ENCODE measurements at regions of chr7 and their contacts with region 1.

Region 1: DNA sequence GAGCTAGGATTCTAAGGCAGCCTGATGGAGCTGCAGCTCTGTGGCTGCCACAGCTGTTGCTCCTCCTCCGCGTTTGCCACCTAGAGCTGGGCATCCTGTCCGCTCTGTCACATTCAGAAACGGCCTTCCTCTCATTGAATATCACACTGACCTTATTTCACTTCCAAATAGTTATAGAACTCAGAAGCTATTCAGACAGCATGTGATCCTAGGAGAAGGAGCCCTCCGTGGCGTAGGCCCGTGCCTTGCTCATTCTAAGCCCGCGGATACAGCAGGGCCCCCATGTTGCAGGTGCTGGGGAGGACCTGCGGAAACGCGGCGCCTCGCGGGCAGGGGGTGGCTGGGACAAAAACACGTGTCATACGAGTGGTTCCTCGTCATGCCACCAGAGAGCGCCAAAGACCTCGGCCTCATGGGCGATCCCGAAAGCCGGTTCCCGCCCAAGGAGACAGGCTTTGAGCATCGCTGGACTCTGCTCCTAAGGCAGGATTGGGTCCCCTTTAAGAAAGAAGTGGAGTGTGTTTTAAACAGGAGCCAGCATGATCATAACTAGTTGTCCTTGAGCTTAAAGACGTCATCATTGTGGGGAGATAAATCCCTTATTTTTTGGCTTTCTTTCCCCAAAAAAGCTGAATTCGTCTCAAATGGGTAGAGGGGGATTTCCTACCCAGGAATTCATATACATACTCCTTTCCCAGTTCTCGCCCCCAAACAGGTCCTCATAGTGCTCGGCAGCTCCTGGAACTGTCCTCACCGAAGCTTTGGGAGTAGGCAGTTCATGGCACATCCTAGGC is 17.9 kb upstream of the FIGNL1 start:
- DNase-seq: peak; percentile 94
- H3K4me3 Mint-ChIP-seq: peak overlapping the region; percentile 54
- H3K27ac Mint-ChIP-seq: peak overlapping the region; percentile 62
- H3K4me1 Mint-ChIP-seq: peaks cover 10% of the 10 kb centered on the region
- H3K27me3 Mint-ChIP-seq: peaks cover 18% of the 10 kb centered on the region

Region 2: DNA sequence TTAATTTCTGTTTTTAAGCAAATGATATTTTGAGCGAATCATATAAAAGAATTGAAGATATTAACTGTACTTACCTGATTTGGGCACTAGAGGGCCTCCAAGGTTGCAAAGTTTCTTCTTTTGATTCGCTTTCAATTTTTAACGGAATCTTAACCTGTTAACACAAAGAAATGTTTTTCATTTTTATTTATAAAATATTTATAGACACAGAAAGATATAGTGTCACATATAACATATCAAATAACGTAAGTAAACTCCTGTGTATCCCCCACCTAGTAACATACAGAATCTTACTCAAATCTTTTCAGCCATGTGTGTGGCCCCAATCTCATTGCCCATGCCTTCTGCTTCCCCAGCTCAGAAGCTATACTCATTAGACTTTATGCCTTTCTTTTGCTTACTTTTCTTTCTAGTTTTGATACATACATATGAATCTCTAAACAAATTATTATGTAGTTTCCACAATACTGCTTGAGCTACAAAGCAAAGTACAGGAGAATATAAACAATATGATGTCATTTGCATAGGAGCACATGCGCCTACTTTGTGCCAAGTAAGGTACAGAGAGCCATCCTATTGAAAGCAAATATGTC is 325.5 kb before region 1 on chr7:
- intact Hi-C with region 1: loop called (anchors 5 kb)
- DNase-seq: peak; percentile 82
- H3K4me3 Mint-ChIP-seq: peak overlapping the region; percentile 57
- H3K27ac Mint-ChIP-seq: peak overlapping the region; percentile 67
- H3K4me1 Mint-ChIP-seq: peaks cover 31% of the 10 kb centered on the region
- H3K27me3 Mint-ChIP-seq: peaks cover 14% of the 10 kb centered on the region

Region 3: GRCh38 chr7:50502001-50502684 is 34.1 kb after region 1 on chr7:
- intact Hi-C with region 1: no loop called
- DNase-seq: no peak
- H3K4me3 Mint-ChIP-seq: no peak overlapping the region
- H3K27ac Mint-ChIP-seq: no peak overlapping the region
- H3K4me1 Mint-ChIP-seq: no peaks in the 10 kb centered on the region
- H3K27me3 Mint-ChIP-seq: peaks cover 12% of the 10 kb centered on the region

Region 4: DNA sequence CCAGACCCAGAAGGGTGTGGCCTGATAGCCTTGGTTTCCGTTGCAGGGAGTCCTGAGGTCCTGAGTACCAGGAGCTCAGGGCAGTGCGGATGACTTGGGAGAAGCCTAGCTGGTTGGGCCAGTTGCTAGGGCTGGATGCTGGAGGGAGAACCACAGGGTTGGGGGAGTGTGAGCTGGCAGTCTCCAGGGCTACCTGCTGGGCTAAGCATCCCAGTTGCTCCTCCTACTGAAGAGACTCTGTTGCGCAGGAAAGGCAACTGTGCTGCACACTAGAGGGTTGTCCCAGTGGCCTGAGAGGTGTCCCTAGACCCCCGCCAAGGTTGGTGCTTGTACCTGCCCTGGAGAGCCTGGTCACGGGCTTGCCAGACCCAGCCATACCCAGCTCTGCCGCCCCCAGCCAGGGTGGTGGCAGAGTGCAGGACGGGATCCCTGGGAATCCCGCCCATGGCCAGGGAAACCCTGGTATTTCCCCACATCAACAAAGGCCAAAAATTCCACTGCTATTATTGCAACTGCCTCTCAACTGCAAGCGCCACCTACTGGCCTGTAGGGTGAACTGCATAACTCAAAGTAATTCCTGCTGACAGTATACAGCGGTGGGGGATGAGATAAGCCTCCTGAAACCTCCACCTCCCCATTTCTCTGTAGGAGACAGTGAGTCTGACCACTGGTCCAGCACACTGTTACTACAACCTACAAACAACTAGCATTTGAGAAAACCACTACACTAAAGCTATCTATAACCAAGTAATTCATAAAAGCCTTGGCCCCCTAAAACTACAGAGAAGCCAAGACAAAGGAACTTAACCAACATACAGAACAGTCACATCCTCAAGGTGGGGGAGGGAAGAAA is 164.8 kb after region 1 on chr7:
- intact Hi-C with region 1: loop called (anchors 1 kb)
- DNase-seq: peak; percentile 86
- H3K4me3 Mint-ChIP-seq: no peak overlapping the region
- H3K27ac Mint-ChIP-seq: no peak overlapping the region
- H3K4me1 Mint-ChIP-seq: peaks cover 4% of the 10 kb centered on the region
- H3K27me3 Mint-ChIP-seq: peaks cover 35% of the 10 kb centered on the region

Region 5: DNA sequence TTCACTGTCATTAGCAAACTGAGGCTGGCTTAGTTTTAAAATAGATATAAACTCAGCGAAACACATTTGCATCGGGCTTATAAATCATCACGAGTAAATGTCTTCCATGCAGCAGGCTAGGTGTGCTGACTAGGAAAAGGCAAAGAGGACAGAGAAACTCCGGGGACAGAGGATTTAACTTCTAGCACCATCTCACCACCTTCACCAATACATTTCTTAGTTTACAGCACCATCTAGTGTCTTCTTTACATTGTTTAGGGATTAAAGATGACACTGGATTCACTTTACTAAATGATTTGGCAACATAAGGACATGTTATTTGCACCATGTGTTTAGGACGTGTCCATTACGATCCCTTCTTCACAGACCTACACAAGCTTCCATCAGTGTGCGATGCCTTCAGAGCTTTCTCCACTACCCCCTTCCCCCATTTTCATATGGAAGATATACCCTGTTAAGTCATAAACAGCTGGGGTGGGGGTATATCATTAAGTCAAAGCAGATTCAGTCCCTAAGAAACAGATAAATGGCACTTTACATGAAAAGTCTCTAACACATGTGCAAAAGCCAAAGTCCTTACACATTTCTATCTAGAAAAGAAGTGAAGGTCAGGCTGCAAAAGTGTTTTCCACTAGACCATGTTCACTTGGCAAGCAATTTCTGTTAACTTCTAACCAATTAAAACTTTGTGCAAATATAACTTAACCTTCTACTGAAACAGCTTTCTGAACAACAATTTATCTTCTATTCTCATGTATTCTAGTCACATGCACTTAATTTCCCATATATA is 211.4 kb after region 1 on chr7:
- intact Hi-C with region 1: loop called (anchors 1 kb)
- DNase-seq: no peak
- H3K4me3 Mint-ChIP-seq: no peak overlapping the region
- H3K27ac Mint-ChIP-seq: no peak overlapping the region
- H3K4me1 Mint-ChIP-seq: peaks cover 2% of the 10 kb centered on the region
- H3K27me3 Mint-ChIP-seq: peaks cover 18% of the 10 kb centered on the region

Region 6: DNA sequence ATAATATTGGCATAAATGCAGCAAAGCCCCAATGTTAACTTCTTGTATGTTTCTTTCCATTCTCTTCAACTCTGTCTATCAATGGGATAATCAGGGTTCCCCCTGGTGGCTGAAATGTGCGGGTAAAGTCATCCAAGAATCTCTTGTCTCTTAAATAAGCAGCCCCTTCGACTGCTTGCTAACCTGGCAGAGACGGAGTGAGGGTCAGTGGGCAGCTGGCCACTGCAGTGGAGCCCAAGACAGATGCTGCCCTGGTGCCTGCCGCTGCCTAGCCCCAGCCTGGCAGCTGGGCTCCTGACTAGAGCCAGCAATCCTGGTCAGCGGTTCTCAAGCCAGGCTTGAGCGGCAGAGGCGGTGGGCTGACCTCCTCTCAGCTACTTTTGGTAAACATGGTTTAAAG is 599.7 kb after region 1 on chr7:
- intact Hi-C with region 1: loop called (anchors 2 kb)
- DNase-seq: peak; percentile 82
- H3K4me3 Mint-ChIP-seq: no peak overlapping the region
- H3K27ac Mint-ChIP-seq: no peak overlapping the region
- H3K4me1 Mint-ChIP-seq: no peaks in the 10 kb centered on the region
- H3K27me3 Mint-ChIP-seq: no peaks in the 10 kb centered on the region

Region 7: GRCh38 chr7:51141451-51142003 is 673.5 kb after region 1 on chr7:
- intact Hi-C with region 1: loop called (anchors 5 kb)
- DNase-seq: peak; percentile 69
- H3K4me3 Mint-ChIP-seq: no peak overlapping the region
- H3K27ac Mint-ChIP-seq: no peak overlapping the region
- H3K4me1 Mint-ChIP-seq: peaks cover 17% of the 10 kb centered on the region
- H3K27me3 Mint-ChIP-seq: peaks cover 12% of the 10 kb centered on the region

Region 8: GRCh38 chr7:51162724-51163329 is 694.8 kb after region 1 on chr7:
- intact Hi-C with region 1: loop called (anchors 2 kb)
- DNase-seq: peak; percentile 91
- H3K4me3 Mint-ChIP-seq: no peak overlapping the region
- H3K27ac Mint-ChIP-seq: no peak overlapping the region
- H3K4me1 Mint-ChIP-seq: peaks cover 5% of the 10 kb centered on the region
- H3K27me3 Mint-ChIP-seq: peaks cover 28% of the 10 kb centered on the region